MCF 10A (cell line): ENCODE measurements at regions of chr1 and their contacts with region 1.

Region 1: DNA sequence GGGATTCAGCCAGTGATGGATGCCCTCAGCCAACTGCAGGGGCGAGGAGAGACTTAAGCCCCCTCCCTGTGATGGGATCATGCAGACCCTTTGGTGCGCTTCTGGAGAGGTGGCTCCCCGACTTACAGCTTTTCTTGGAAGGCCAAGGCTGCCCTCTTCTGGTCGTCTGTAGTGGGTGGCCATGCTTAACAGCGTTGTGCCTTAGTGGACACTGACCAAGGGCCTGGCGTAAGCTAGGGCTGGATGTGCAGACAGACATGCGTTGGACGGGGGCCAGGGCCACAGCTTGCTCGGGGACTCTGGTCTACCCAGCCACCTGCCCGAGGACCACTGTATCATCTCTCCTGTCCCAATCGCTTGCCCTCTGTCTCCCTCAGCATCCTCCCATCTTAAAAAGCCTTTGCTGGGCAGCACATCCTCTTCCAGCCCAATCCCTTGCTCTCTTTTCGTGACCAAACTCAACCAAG is 5.5 kb downstream of the AZIN2 start:
- DNase-seq: peak; percentile 80
- H3K4me3 Mint-ChIP-seq: no peak overlapping the region
- H3K27ac Mint-ChIP-seq: no peak overlapping the region
- H3K4me1 Mint-ChIP-seq: peaks cover 14% of the 10 kb centered on the region
- H3K27me3 Mint-ChIP-seq: no peaks in the 10 kb centered on the region
- CTCF ChIP-seq: peak; percentile 84

Region 2: GRCh38 chr1:32876341-32877210 is 209.8 kb before region 1 on chr1:
- CTCF ChIA-PET with region 1: interaction called, 10 read pairs
- POLR2A ChIA-PET with region 1: interaction called, 4 read pairs
- intact Hi-C with region 1: loop called (anchors 1 kb)
- DNase-seq: peak; percentile 58
- H3K4me3 Mint-ChIP-seq: no peak overlapping the region
- H3K27ac Mint-ChIP-seq: no peak overlapping the region
- H3K4me1 Mint-ChIP-seq: peaks cover 7% of the 10 kb centered on the region
- H3K27me3 Mint-ChIP-seq: peaks cover 10% of the 10 kb centered on the region
- CTCF ChIP-seq: peak; percentile 86

Region 3: DNA sequence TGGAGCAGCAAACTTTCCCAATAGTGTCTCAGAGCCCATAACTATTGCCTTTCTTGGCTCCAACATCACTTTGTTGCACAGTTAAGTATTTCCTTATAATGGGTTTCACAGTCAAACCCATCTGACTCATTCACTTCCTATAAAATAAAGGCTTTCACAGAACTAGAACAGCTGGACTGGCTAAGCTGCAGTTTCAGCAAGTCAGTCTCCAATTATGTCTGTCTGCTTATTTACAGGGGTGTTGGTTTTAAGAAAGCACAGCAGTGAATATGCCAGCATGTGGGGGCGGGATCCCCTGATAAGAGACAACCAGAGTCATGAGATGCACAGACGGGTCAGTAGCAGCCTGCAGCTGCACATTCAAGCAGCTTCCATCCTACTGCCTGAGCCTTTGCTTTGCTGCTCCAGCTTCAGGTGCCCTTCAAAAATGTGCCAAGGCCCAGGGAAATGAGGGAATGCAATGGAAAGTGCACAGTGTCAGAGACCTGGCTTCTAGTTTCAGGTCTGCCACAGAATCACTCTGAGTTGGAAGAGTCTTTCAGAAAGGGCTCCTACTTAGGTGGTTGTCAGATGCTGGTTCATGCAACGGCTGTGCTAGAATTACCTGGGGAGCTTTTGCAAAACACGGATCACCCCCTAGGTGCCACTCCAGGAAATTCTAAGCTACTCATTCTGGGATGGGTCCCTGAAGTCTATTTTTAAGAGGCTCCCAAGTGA is 146.6 kb before region 1 on chr1:
- CTCF ChIA-PET with region 1: interaction called, 58 read pairs
- POLR2A ChIA-PET with region 1: interaction called, 5 read pairs
- intact Hi-C with region 1: no loop called
- DNase-seq: peak; percentile 83
- H3K4me3 Mint-ChIP-seq: no peak overlapping the region
- H3K27ac Mint-ChIP-seq: peak overlapping the region; percentile 81
- H3K4me1 Mint-ChIP-seq: peaks cover 9% of the 10 kb centered on the region
- H3K27me3 Mint-ChIP-seq: no peaks in the 10 kb centered on the region
- CTCF ChIP-seq: no peak

Region 4: DNA sequence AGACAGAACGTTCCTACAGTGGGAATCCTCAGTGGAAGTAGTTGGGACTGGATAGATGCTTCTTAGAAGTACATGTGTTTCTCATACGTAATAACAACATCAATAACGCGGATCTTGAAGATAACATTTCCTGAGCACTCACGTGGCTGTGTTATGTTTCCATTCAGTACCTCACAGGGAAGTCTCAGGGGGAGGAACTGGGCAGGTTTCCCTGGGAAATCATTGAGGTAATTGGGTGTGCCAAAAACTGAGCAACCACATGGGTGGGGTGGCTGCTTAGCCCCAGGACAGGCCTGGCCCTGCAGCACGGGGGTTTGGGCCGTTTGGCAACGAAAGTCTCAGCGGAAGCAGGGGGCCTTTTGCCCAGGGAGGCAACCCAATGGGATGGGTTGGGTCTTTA is 519.9 kb after region 1 on chr1:
- CTCF ChIA-PET with region 1: no interaction called
- POLR2A ChIA-PET with region 1: no interaction called
- intact Hi-C with region 1: no loop called
- DNase-seq: no peak
- H3K4me3 Mint-ChIP-seq: no peak overlapping the region
- H3K27ac Mint-ChIP-seq: no peak overlapping the region
- H3K4me1 Mint-ChIP-seq: no peaks in the 10 kb centered on the region
- H3K27me3 Mint-ChIP-seq: no peaks in the 10 kb centered on the region
- CTCF ChIP-seq: no peak